Mammary epithelial cell (primary cell): ENCODE measurements at regions of chrX and their contacts with region 1.

Region 1: GRCh38 chrX:150587585-150588503 is 19.4 kb downstream of the MTM1 start:
- DNase-seq: no peak
- H3K4me3 ChIP-seq: no peak overlapping the region
- H3K27ac ChIP-seq: no peak overlapping the region
- H3K4me1 ChIP-seq: no peaks in the 10 kb centered on the region
- H3K27me3 ChIP-seq: no peaks in the 10 kb centered on the region
- CTCF ChIP-seq: peak; percentile 51 to 55

Region 2: DNA sequence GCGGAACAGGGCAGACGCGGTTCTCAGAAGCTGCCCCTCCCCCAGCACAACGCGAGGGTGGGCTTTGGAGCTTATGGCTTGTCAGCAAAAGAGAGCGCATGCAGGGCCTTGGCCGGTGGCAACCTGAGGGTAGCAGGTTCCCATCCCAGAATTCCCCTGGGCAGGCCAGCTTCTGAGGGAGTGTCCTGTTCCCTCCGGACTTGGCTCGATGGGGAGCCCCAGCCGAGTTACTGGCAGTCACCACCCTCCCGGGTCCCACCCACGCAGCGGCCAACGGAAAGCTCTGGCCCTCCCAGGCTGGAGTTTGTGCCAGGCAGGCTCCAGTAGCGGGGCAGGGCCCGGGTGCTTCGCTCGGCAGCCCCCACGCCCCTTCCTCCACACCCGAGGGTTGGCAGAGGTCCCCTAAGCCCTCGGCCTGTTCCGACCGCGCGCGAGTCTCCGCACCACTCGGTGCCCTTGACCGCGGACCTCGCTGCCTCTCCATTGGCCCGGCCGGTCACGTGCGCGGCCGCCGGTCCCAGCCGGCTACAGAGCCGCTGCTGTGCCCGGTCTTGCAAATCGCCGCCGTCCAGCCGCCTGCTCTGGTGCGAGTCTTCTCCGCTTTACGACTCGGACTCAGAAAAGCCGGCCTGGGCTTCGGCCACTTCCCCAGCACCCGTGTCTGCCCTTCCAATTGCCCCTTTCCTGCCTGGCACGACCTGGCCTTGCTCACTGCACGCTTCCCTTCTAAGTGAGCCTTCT is 40.3 kb before region 1 on chrX:
- CTCF ChIA-PET with region 1: no interaction called
- dilution Hi-C with region 1: no loop called
- in situ Hi-C with region 1: no loop called
- intact Hi-C with region 1: loop called (anchors 5 kb)
- DNase-seq: no peak
- H3K4me3 ChIP-seq: peak overlapping the region in 2 of 3 experiments; percentile 24 to 27
- H3K27ac ChIP-seq: no peak overlapping the region
- H3K4me1 ChIP-seq: peaks cover 16% of the 10 kb centered on the region
- H3K27me3 ChIP-seq: no peaks in the 10 kb centered on the region
- CTCF ChIP-seq: no peak